ENCODE measurements at regions of chr9 and their contacts with region 1.

Region 1: DNA sequence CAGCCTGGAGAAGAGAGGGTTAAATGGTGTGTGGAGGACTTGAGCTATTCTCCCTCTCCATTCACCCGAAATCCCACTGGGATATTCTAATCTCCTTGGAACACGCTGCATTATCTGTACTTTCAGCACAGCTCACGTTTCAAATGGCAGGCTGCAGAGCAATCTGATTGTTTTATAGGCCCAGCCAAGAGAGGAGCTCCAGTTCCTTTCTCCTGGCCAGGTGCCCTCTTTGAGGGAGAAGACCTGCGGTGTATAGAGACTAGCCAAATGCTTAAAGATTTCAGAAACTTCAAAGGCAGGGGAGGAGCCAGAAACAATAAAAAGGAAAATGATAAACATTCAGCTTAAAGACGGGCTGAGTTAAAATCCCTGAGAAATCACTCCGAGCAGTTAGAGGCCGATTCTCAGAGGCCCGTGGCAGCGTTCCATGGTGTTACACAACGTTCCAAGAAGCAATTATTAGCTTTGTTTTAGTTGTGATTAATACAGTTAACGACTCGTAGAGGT is 564.0 kb upstream of the KLF4 start:
- DNase-seq: peak; percentile 88
- H3K4me3 ChIP-seq: no peak overlapping the region
- H3K27ac ChIP-seq: peak overlapping the region; percentile 2 to 10
- H3K4me1 ChIP-seq: peaks cover 3% of the 10 kb centered on the region
- H3K27me3 ChIP-seq: no peaks in the 10 kb centered on the region
- CTCF ChIP-seq: no peak
- POLR2A ChIP-seq: no peak

Region 2: DNA sequence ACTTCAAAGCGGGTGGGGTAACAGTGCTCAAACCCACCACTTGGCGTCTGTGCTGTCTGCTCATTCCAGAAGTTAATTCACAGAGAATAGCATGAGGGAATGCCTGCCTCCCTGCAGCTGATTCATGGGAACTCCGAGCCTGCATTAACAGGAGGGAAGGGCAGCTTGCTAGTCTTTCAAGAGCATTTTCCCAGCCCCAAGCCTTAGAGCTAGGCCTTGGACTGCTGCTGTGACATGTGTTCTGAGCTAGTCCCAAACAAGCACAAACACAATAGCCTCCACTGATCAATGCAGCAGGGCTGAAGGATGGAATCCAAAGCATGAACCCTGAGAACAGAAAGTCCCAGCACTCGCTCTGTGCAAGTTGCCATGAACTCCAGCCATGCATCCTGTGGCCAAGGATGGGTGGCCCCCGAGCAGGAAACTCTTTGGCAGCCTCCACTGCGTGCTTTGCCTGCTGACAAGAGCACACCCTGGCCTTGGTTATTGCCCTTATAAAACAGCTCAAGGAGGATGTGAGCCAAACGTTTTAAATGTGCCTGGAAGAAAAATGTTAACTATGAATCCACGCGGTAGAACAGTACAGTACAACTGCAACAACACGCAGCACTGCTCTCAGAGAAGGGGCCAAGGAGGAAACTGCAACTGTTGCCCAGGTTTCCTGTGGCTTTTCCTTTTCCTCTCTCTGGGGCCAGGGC is 89.0 kb after region 1 on chr9:
- intact Hi-C with region 1: loop called (anchors 5 kb)
- DNase-seq: peak; percentile 95
- H3K4me3 ChIP-seq: no peak overlapping the region
- H3K27ac ChIP-seq: peak overlapping the region; percentile 54 to 63
- H3K4me1 ChIP-seq: peaks cover 10% of the 10 kb centered on the region
- H3K27me3 ChIP-seq: no peaks in the 10 kb centered on the region
- CTCF ChIP-seq: peak in 2 of 4 experiments; percentile 15 to 28
- POLR2A ChIP-seq: no peak

Region 3: GRCh38 chr9:108153416-108153815 is 99.8 kb after region 1 on chr9:
- intact Hi-C with region 1: no loop called
- DNase-seq: no peak
- H3K4me3 ChIP-seq: no peak overlapping the region
- H3K27ac ChIP-seq: no peak overlapping the region
- H3K4me1 ChIP-seq: no peaks in the 10 kb centered on the region
- H3K27me3 ChIP-seq: no peaks in the 10 kb centered on the region
- CTCF ChIP-seq: no peak
- POLR2A ChIP-seq: no peak

Measured in prostate gland (tissue), 2 donors.